ENCODE measurements at regions of chr3 and their contacts with region 1.

Region 1: DNA sequence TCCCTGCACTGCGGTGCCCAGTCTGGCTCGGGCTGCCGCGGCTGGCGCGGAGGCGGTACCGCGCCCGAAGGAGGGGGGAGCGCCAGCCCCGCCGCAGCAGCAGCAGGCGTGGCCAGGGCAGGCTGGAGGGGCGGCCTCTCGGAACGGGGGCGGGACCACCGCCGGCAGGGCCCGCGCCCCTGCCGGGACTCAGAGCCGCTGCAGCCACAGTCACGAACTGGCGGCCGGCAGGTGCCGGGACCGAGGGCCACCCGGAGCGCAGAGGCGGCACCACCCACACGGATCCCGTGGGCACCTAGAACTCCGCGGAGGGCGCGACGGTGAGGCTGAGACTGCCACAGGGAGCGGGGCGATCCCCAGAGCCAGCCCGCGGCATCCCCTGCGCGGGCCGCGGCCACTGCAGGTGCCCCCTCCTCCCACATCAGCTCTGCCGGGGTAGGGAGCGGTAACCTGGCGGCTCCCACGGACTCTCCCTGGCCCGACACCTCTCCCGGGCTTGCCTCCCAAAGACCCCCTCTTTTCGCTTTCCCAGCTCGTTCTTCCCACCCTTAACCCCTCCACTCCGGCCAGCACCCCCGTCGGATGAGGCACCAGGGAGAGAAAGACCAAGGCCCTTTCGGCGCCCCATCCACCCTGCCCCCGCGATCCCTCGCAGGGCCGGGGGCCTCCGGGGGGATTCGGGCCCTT is at the start of gene VWA5B2:
- DNase-seq: peak; percentile 18
- ATAC-seq: peak; percentile 94
- H3K4me3 ChIP-seq: peak within 1 kb of the TSS; percentile 47
- H3K27ac ChIP-seq: no peak within 1 kb of the TSS
- H3K4me1 ChIP-seq: no peaks in the 10 kb centered on the region; the same call in 1 of the 2 replicates
- H3K27me3 ChIP-seq: peaks cover 64% of the 10 kb centered on the region
- CTCF ChIP-seq: peak; percentile 18; the same call in 1 of the 2 replicates
- POLR2A ChIP-seq: no peak
- RAD21 ChIP-seq: no peak
- total RNA-seq, gene VWA5B2: not detected in 2 replicates

Region 2: DNA sequence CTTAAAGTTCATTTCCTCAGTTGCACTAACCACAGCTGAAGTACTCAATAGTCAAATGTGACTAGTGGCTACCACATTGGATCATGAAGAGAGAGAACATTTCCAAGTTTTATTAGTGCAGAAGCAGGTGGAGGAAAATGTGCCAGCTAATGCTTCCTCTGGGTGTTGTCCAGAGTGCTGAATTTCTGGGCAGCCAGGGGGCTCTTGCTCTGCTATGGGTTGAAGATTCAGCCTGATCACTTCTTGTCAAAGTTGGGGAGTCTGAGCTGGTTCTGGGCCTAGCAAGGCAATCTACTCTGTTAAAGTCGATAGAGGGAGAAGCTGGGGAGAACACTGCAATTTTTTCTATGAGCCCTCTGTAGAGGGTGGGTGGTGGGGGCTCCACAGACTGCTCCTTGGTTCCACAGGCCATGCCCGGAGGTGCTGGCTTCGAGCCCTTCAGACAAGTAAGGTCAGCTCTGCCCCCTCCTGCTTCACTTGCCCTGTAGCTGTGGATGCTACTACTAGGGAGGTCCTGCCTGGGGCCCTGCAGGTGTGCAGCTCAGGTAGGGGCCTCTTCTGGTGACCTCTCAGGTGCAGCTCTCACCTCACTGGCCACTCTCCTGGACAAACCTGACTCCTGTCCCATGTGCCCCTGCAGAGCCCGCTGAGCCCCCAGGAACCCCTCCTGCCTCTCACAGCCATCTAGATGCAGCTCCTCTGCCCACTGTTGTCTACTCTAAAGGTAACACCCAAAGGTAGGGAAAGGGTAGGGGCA is 11.0 kb after region 1 on chr3:
- CTCF ChIA-PET with region 1: interaction called, 10 read pairs
- POLR2A ChIA-PET with region 1: no interaction called
- dilution Hi-C with region 1: no loop called
- in situ Hi-C with region 1: no loop called
- intact Hi-C with region 1: no loop called
- DNase-seq: peak; percentile 28
- ATAC-seq: peak; percentile 63
- H3K4me3 ChIP-seq: no peak overlapping the region
- H3K27ac ChIP-seq: no peak overlapping the region
- H3K4me1 ChIP-seq: no peaks in the 10 kb centered on the region
- H3K27me3 ChIP-seq: peaks cover 14% of the 10 kb centered on the region; the same call in 1 of the 2 replicates
- CTCF ChIP-seq: no peak
- POLR2A ChIP-seq: no peak
- RAD21 ChIP-seq: no peak

Region 3: GRCh38 chr3:184335661-184336546 is 106.4 kb after region 1 on chr3:
- CTCF ChIA-PET with region 1: no interaction called
- POLR2A ChIA-PET with region 1: no interaction called
- dilution Hi-C with region 1: no loop called
- in situ Hi-C with region 1: no loop called
- intact Hi-C with region 1: no loop called
- DNase-seq: peak; percentile 78
- ATAC-seq: peak; percentile 49
- H3K4me3 ChIP-seq: peak overlapping the region; percentile 91
- H3K27ac ChIP-seq: peak overlapping the region; percentile 96
- H3K4me1 ChIP-seq: peaks cover 43% of the 10 kb centered on the region
- H3K27me3 ChIP-seq: no peaks in the 10 kb centered on the region
- CTCF ChIP-seq: no peak
- POLR2A ChIP-seq: peak; percentile 61
- RAD21 ChIP-seq: no peak

Measured in IMR-90 (cell line).